ENCODE measurements at regions of chr14 and their contacts with region 1.

Region 1: DNA sequence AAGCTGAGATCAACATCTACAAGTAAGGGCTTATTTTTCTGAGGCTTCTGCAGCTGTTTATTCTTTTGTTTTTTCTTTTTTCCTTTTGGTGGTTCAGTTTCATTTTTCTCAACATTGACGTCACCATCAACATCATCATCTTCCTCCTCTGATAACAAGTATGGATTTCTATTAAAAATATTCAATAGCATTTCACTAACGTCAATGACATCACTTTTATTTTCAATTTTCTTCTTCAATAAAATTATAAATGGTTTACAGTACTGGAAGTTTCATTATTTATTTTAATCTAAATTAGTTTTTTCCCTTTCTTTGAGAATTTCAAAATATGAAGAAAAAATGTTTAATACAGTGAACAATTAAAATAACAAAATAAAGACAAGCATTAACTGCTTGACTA is 23.9 kb downstream of the NEMF start:
- DNase-seq: no peak
- ATAC-seq: no peak
- H3K4me3 ChIP-seq: no peak overlapping the region
- H3K4me3 Mint-ChIP-seq: no peak overlapping the region
- H3K27ac ChIP-seq: no peak overlapping the region
- H3K27ac Mint-ChIP-seq: no peak overlapping the region
- H3K4me1 ChIP-seq: no peaks in the 10 kb centered on the region
- H3K4me1 Mint-ChIP-seq: peaks cover 5% of the 10 kb centered on the region
- H3K27me3 ChIP-seq: no peaks in the 10 kb centered on the region
- H3K27me3 Mint-ChIP-seq: no peaks in the 10 kb centered on the region
- CTCF ChIP-seq: no peak

Region 2: DNA sequence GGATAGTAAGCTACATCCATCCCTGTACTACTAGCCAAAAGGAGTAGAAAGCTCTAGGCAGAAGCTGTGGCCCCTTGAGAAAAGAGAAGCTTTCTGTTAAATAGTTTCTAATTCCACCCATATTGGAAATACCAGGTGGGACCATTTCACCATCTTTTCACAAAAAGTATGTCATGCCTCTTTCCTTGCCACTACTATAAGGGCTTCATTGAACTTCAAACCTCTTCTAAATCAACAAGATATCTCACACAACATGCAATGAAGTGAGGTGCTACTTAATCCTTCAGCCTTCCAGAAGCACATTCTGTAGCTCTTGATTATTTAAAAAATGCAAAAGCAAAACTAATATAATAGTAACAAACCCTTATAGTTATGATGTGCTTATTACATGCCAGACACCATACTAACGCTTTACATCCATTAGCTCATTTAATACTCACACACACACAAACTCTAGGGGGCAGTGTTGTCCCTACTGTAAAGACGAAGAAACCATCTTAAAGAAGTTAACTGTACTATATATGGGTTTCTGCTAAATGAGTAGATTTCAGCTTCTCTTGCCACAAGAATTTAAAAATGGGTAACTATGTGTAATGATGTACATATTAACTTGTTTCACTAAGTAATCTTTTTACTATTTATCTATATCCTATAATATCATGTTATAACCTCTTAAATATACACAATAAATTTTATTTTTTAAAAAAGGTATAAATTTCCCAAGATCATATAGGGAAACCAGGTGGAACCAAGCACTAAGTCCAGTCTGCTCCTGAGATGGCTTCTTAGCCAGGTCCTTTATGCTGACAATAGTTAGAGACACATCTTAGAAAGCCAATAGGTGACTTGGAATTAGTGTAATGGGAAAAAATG is 366.9 kb before region 1 on chr14:
- CTCF ChIA-PET with region 1: interaction called, 6 read pairs
- POLR2A ChIA-PET with region 1: no interaction called
- intact Hi-C with region 1: loop called in 1 of 2 experiments (anchors 2 kb)
- DNase-seq: peak in 8 of 9 experiments; percentile 39 to 85 (median 54)
- ATAC-seq: peak; percentile 87
- H3K4me3 ChIP-seq: no peak overlapping the region
- H3K4me3 Mint-ChIP-seq: no peak overlapping the region
- H3K27ac ChIP-seq: no peak overlapping the region
- H3K27ac Mint-ChIP-seq: no peak overlapping the region
- H3K4me1 ChIP-seq: no peaks in the 10 kb centered on the region
- H3K4me1 Mint-ChIP-seq: no peaks in the 10 kb centered on the region
- H3K27me3 ChIP-seq: no peaks in the 10 kb centered on the region
- H3K27me3 Mint-ChIP-seq: peaks cover 3% of the 10 kb centered on the region
- CTCF ChIP-seq: peak; percentile 78

Region 3: GRCh38 chr14:49786315-49787110 is 42.1 kb before region 1 on chr14:
- CTCF ChIA-PET with region 1: interaction called, 6 read pairs
- POLR2A ChIA-PET with region 1: interaction called, 3 read pairs
- intact Hi-C with region 1: loop called in 1 of 2 experiments (anchors 5 kb)
- DNase-seq: no peak
- ATAC-seq: no peak
- H3K4me3 ChIP-seq: no peak overlapping the region
- H3K4me3 Mint-ChIP-seq: no peak overlapping the region
- H3K27ac ChIP-seq: no peak overlapping the region
- H3K27ac Mint-ChIP-seq: peak overlapping the region; percentile 15
- H3K4me1 ChIP-seq: no peaks in the 10 kb centered on the region
- H3K4me1 Mint-ChIP-seq: peaks cover 2% of the 10 kb centered on the region
- H3K27me3 ChIP-seq: no peaks in the 10 kb centered on the region
- H3K27me3 Mint-ChIP-seq: no peaks in the 10 kb centered on the region
- CTCF ChIP-seq: no peak

Region 4: GRCh38 chr14:49808780-49809179 is 19.9 kb before region 1 on chr14:
- CTCF ChIA-PET with region 1: no interaction called
- POLR2A ChIA-PET with region 1: interaction called, 3 read pairs
- intact Hi-C with region 1: loop called in 1 of 2 experiments (anchors 2 kb)
- DNase-seq: no peak
- ATAC-seq: no peak
- H3K4me3 ChIP-seq: no peak overlapping the region
- H3K4me3 Mint-ChIP-seq: no peak overlapping the region
- H3K27ac ChIP-seq: no peak overlapping the region
- H3K27ac Mint-ChIP-seq: peak overlapping the region; percentile 56
- H3K4me1 ChIP-seq: no peaks in the 10 kb centered on the region
- H3K4me1 Mint-ChIP-seq: peaks cover 7% of the 10 kb centered on the region
- H3K27me3 ChIP-seq: no peaks in the 10 kb centered on the region
- H3K27me3 Mint-ChIP-seq: no peaks in the 10 kb centered on the region
- CTCF ChIP-seq: no peak

Measured in CD8-positive, alpha-beta T cell (primary cell).